IMR-90 (cell line): ENCODE measurements at regions of chr22 and their contacts with region 1.

Region 1: DNA sequence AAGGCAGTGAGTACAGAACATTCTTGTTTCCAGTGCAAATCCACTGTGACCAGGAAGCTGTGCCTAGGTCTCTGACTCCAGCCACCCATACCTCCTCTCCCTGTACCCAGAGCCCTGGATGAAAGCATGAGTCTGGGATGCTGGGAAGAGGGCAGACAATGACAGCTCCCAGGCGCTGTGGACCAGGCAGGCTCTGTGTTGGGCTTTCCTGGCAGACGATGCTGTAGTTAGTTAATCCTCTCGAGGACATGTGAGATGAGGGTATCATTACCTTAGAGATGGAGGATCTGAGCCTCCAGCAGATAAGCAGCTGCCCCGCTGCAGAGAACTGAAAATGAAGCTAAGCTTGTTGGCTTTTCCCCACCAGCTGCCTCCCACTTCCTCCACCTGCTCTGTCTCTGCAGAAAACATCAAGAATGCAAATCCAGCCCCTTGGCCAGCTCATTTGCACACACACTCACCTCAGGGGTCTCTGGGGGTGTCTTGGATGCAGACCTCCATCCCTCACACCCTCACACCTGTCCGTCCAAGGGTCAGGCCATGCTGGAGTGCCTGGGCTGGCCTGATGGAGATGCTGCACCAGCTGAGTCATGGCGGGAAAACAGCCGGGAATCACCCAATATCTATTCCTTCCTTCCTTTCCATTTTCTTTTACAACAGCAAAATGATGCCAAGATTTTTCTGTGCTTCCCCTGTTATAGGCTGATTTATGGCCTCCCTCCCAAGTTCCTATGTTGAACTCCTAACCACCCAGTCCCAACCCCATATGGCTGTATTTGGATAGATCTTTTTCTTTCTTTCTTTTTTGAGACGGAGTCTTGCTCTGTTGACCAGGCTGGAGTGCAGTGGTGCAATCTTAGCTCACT is 94.9 kb upstream of the SEPTIN5 start:
- DNase-seq: no peak
- ATAC-seq: no peak
- H3K4me3 ChIP-seq: no peak overlapping the region
- H3K27ac ChIP-seq: no peak overlapping the region
- H3K4me1 ChIP-seq: no peaks in the 10 kb centered on the region
- H3K27me3 ChIP-seq: peaks cover 60% of the 10 kb centered on the region
- CTCF ChIP-seq: no peak
- POLR2A ChIP-seq: no peak
- RAD21 ChIP-seq: no peak

Region 2: GRCh38 chr22:19420321-19420720 is 199.1 kb before region 1 on chr22:
- CTCF ChIA-PET with region 1: no interaction called
- POLR2A ChIA-PET with region 1: interaction called, 12 read pairs
- dilution Hi-C with region 1: no loop called
- in situ Hi-C with region 1: no loop called
- intact Hi-C with region 1: no loop called
- DNase-seq: no peak
- ATAC-seq: no peak
- H3K4me3 ChIP-seq: no peak overlapping the region
- H3K27ac ChIP-seq: no peak overlapping the region
- H3K4me1 ChIP-seq: peaks cover 5% of the 10 kb centered on the region; the same call in 1 of the 2 replicates
- H3K27me3 ChIP-seq: no peaks in the 10 kb centered on the region
- CTCF ChIP-seq: no peak
- POLR2A ChIP-seq: no peak
- RAD21 ChIP-seq: no peak

Region 3: GRCh38 chr22:19663286-19663815 is 44.0 kb after region 1 on chr22:
- CTCF ChIA-PET with region 1: no interaction called
- POLR2A ChIA-PET with region 1: no interaction called
- dilution Hi-C with region 1: no loop called
- in situ Hi-C with region 1: no loop called
- intact Hi-C with region 1: no loop called
- DNase-seq: peak; percentile 76
- ATAC-seq: peak; percentile 56
- H3K4me3 ChIP-seq: no peak overlapping the region
- H3K27ac ChIP-seq: no peak overlapping the region
- H3K4me1 ChIP-seq: peaks cover 24% of the 10 kb centered on the region
- H3K27me3 ChIP-seq: no peaks in the 10 kb centered on the region
- CTCF ChIP-seq: no peak
- POLR2A ChIP-seq: no peak
- RAD21 ChIP-seq: no peak